IMR-90 (cell line): ENCODE measurements at regions of chr2 and their contacts with region 1.

Region 1: GRCh38 chr2:65710779-65711295 is 278.4 kb upstream of the SPRED2 start:
- DNase-seq: peak; percentile 8
- ATAC-seq: peak; percentile 35; the same call in 1 of the 2 replicates
- H3K4me3 ChIP-seq: no peak overlapping the region
- H3K27ac ChIP-seq: no peak overlapping the region
- H3K4me1 ChIP-seq: peaks cover 5% of the 10 kb centered on the region
- H3K27me3 ChIP-seq: peaks cover 9% of the 10 kb centered on the region
- CTCF ChIP-seq: peak; percentile 36; the same call in 1 of the 2 replicates
- POLR2A ChIP-seq: no peak
- RAD21 ChIP-seq: 0 out of 2 replicates have a peak, but pooled peaks have one; percentile 21

Region 2: DNA sequence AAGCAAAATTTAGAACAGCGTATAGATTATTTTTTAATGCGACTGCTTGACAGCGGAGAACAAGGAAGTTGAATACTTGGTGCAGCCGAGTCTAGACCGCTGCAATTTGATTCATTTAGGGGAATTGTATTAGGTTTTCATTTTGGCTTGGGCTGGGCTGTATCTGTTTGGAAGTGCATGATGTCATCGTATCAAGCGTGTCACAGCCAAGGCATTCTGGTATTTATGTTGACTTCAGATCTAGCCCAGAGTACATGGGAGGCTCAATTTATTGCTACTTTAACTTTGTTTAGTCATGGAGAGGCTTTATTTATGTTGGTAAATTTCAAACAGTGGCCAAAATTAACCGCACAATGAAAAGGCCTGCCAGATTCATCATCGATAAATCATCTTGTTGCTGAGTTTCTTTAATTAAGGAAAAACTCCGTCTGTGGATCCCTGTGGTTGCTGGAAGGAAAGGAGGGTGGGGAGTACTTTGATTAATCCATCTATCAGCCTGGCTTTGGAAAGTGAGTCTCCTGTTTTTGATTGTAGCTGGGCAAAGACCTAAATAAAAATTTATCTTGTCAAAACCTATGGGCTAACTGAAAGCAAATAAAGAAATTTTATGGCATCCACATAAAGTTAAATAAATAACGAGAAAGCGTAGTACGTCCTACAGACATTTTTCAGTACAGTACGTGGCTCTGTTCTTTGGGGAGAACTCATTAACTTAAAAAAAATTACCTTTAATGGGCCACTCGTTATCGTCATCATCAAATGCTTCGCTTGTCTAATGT is 48.0 kb before region 1 on chr2:
- CTCF ChIA-PET with region 1: interaction called, 3 read pairs
- POLR2A ChIA-PET with region 1: no interaction called
- dilution Hi-C with region 1: no loop called
- in situ Hi-C with region 1: no loop called
- intact Hi-C with region 1: loop called (anchors 2 kb)
- DNase-seq: peak; percentile 93
- ATAC-seq: peak; percentile 91
- H3K4me3 ChIP-seq: no peak overlapping the region
- H3K27ac ChIP-seq: no peak overlapping the region
- H3K4me1 ChIP-seq: peaks cover 20% of the 10 kb centered on the region
- H3K27me3 ChIP-seq: peaks cover 4% of the 10 kb centered on the region
- CTCF ChIP-seq: no peak
- POLR2A ChIP-seq: no peak
- RAD21 ChIP-seq: no peak